H1 (cell line): ENCODE measurements at regions of chr15 and their contacts with region 1.

Region 1: GRCh38 chr15:99130314-99130713 is 25.4 kb downstream of the SYNM start:
- DNase-seq: no peak
- H3K4me3 ChIP-seq: no peak overlapping the region
- H3K27ac ChIP-seq: no peak overlapping the region
- H3K4me1 ChIP-seq: peaks cover 0 to 3% (median 0%) of the 10 kb centered on the region in 4 experiments; a peak in 1 of 7 replicates
- H3K27me3 ChIP-seq: no peaks in the 10 kb centered on the region
- CTCF ChIP-seq: no peak
- EP300 ChIP-seq: no peak
- POLR2A ChIP-seq: no peak
- RAD21 ChIP-seq: no peak

Region 2: DNA sequence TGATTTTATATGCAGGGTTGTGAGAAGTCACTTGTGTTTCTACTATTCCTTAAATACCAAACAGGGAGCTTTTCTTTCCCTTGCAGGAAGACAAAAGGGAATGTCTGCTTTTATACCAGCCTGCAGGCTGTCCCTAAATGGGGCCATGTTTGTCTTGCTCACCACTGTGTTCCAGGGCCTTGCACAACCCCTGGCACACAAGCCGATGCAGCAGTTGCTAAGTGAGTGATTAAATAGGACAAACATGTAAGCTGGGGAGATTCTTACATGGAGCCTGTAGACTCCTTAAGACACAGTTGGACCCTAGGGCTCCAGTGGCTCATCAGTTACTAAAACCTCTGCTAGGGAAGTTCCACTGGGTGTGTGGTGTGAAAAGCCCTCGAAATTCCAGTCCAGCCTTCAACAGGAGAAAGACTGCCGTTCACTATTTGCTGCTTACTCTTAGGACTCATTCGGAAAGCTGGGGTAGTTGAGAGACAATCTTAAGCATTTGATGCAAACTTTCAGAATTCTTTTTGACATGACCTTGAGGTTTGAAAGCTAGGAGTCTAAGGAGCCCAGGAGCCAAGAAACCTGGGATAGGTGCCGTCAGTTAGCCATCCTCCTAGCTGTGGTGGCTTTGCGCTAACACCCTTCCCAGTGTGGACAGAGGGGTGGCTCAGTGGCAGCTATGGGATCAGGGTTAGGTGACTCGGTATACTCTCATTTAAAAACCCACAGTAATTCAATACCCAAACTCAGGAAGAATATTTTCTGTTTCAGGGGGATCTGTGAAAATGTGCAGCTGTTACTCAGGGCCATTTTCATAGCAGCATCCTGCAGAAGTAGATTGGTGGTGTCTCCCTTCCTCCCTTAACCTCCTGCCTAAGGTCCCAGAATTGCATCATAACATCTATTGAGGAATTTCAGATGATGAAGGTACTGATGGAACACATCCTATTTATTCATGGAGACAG is 13.6 kb after region 1 on chr15:
- CTCF ChIA-PET with region 1: interaction called, 11 read pairs
- POLR2A ChIA-PET with region 1: no interaction called
- DNase-seq: no peak
- H3K4me3 ChIP-seq: no peak overlapping the region
- H3K27ac ChIP-seq: no peak overlapping the region
- H3K4me1 ChIP-seq: peaks cover 5 to 22% (median 17%) of the 10 kb centered on the region in 4 experiments
- H3K27me3 ChIP-seq: no peaks in the 10 kb centered on the region
- CTCF ChIP-seq: no peak
- EP300 ChIP-seq: no peak
- POLR2A ChIP-seq: no peak
- RAD21 ChIP-seq: no peak

Region 3: DNA sequence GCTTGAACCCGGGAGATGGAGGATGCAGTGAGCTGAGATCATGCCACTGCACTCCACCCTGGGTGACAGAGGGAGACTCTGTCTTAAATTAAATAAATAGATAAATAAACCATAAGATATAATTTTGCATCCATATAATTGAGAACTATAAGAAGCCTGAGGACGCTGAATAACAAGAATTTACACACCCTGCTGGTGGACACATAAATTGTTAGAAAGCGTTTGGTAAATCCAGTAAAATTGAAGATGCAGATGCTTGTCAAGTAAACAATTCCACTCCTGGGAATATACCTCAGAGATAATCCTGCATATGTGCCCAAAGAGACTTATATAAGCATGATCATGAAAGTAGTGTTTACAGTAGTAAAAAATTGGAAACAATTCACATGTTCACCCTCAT is 77.4 kb after region 1 on chr15:
- CTCF ChIA-PET with region 1: no interaction called
- POLR2A ChIA-PET with region 1: no interaction called
- DNase-seq: no peak
- H3K4me3 ChIP-seq: no peak overlapping the region
- H3K27ac ChIP-seq: no peak overlapping the region
- H3K4me1 ChIP-seq: no peaks in the 10 kb centered on the region
- H3K27me3 ChIP-seq: no peaks in the 10 kb centered on the region
- CTCF ChIP-seq: no peak
- EP300 ChIP-seq: no peak
- POLR2A ChIP-seq: no peak
- RAD21 ChIP-seq: no peak